IMR-90 (cell line): ENCODE measurements at regions of chr14 and their contacts with region 1.

Region 1: DNA sequence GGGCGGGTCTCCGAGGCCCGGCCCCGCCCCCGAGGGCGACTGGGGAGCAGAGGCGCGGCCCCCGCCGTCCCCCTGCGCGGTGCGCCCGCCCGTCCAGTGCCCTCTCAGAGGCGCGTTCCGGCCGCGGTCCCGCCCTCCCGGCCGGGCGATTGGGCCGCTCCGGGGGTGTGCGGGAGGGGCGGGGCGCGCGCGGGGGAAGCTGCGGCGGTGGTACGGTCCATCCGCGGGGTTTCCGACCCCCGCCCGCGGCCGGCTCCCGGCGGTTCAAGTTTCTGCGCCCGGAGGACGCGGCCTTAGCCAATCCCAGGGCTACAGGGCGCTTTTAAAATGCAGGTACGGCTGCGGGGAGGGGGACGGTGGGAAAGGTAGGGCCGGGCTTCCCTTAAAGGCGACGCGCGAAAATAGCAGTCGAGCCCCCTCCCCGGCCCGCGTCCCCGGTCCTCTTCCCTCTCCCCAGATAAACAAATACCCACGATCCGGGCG is 317 bp upstream of the CCDC85C start:
- DNase-seq: peak; percentile 94
- ATAC-seq: peak; percentile 94
- H3K4me3 ChIP-seq: peak overlapping the region; percentile 63
- H3K27ac ChIP-seq: peak overlapping the region; percentile 83
- H3K4me1 ChIP-seq: peaks cover 16% of the 10 kb centered on the region
- H3K27me3 ChIP-seq: no peaks in the 10 kb centered on the region
- CTCF ChIP-seq: no peak
- POLR2A ChIP-seq: no peak
- RAD21 ChIP-seq: no peak

Region 2: DNA sequence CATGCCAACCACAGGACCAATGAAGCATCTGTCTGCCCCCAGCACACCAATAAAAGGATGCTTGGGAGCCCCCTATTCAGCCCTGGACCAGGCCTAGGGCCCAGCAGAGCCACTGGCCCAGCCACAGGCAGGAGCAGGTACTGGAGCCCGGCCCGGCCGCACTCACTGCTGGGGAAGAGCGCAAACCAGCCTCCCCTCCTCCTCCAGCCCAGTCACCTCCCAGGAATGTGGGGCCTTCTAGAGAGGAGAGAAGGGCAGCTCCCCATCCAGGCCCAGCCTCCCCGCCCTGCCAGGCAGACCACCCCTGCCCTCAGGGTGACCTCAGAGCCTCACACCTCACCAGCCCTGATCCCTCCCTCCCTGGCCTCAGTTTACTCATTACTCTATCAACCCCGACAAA is 66.9 kb before region 1 on chr14:
- CTCF ChIA-PET with region 1: interaction called, 3 read pairs
- POLR2A ChIA-PET with region 1: no interaction called
- dilution Hi-C with region 1: no loop called
- in situ Hi-C with region 1: no loop called
- intact Hi-C with region 1: loop called (anchors 2 kb)
- DNase-seq: peak; percentile 83
- ATAC-seq: peak; percentile 98
- H3K4me3 ChIP-seq: no peak overlapping the region
- H3K27ac ChIP-seq: peak overlapping the region; percentile 88
- H3K4me1 ChIP-seq: peaks cover 26% of the 10 kb centered on the region
- H3K27me3 ChIP-seq: no peaks in the 10 kb centered on the region
- CTCF ChIP-seq: no peak
- POLR2A ChIP-seq: no peak
- RAD21 ChIP-seq: no peak; the same call in 1 of the 2 replicates

Region 3: GRCh38 chr14:99563233-99564129 is 40.8 kb before region 1 on chr14:
- CTCF ChIA-PET with region 1: no interaction called
- POLR2A ChIA-PET with region 1: interaction called, 3 read pairs
- dilution Hi-C with region 1: no loop called
- in situ Hi-C with region 1: no loop called
- intact Hi-C with region 1: loop called (anchors 1 kb)
- DNase-seq: peak; percentile 65
- ATAC-seq: peak; percentile 73
- H3K4me3 ChIP-seq: no peak overlapping the region
- H3K27ac ChIP-seq: no peak overlapping the region
- H3K4me1 ChIP-seq: peaks cover 38% of the 10 kb centered on the region
- H3K27me3 ChIP-seq: no peaks in the 10 kb centered on the region
- CTCF ChIP-seq: peak; percentile 49
- POLR2A ChIP-seq: no peak
- RAD21 ChIP-seq: peak; percentile 58